K562 (cell line): ENCODE measurements at regions of chr15 and their contacts with region 1.

Region 1: DNA sequence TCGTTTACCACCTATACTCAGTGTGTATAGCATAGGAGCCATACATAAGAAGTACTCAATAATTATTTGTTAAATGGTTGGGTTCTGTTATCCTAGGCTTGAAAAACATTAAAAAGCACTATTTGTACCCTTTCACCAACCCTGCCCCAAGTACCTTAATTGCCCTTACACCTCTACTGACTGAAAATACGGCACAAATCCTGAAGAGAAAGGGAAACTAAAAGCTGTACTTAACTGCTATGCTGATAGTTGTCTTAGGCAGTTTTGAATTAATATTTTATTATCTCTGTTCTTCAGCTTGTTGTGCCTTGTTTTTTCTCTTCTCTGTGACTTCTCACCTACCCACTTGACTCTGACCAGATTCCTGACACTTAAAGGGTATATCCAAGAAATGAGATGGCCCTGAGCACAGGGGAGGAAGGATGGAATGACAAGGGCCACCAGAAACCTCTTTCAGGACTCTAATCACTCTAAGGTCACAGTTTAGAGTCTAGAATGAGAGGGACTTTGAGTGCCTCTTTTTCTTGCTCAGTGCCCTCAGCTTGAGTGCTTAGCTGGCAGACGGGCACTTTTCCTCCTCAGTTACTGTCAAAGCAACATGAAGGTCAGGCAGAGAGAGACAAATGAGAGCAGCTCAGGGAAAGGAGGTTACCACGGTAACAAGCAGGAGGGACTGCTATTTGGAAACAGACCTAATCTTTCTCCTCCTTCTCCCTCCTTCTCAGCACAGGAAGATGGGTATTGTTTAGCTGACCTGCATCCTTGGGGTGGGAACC is 136.5 kb downstream of the ZNF609 start:
- DNase-seq: peak in 2 of 4 experiments; percentile 45 to 47
- ATAC-seq: peak; percentile 82
- H3K4me3 ChIP-seq: no peak overlapping the region
- H3K27ac ChIP-seq: peak overlapping the region; percentile 37; the same call in 2 of the 3 replicates
- H3K4me1 ChIP-seq: peaks cover 0 to 11% of the 10 kb centered on the region in 2 experiments; a peak in 3 of 5 replicates
- H3K27me3 ChIP-seq: no peaks in the 10 kb centered on the region
- CTCF ChIP-seq: no peak
- EP300 ChIP-seq: no peak
- POLR2A ChIP-seq: no peak
- RAD21 ChIP-seq: no peak

Region 2: DNA sequence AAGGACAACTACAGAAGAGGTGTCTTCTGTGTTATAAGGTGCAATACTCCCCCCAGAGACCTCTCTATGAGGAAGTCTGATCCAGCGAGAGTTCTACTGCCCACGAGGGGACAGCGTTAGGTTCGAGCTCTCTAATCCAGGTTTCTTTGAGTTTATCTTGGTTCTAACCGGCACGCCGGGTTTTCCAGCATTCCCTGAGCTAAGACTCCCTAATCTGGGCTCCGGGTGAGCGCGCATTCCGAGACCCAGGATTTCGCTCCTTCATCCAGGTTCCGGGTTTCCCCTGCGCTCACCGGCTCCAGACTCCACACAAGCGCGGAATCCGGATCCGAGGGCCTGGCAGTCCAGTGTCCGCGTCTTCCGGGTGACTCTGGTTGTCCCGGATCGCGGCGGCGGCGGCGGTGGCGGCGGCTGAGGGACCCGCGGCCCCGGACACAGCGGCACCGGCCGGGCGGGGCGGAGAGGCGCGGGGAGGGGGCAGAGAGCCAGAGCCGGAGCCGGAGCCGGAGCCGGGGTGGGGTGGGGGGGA is 136.6 kb before region 1 on chr15 and contains the start of gene ZNF609:
- CTCF ChIA-PET with region 1: no interaction called
- POLR2A ChIA-PET with region 1: no interaction called
- in situ Hi-C with region 1: no loop called
- intact Hi-C with region 1: no loop called
- DNase-seq: peak; percentile 95
- ATAC-seq: peak; percentile 73
- H3K4me3 ChIP-seq: peak within 1 kb of the TSS; percentile 55
- H3K27ac ChIP-seq: peak within 1 kb of the TSS; percentile 88
- H3K4me1 ChIP-seq: peaks cover 6 to 60% of the 10 kb centered on the region in 2 experiments; a peak in 4 of 5 replicates
- H3K27me3 ChIP-seq: no peaks in the 10 kb centered on the region
- CTCF ChIP-seq: no peak
- EP300 ChIP-seq: peak; percentile 62
- POLR2A ChIP-seq: peak; percentile 39; the same call in 1 of the 2 replicates
- RAD21 ChIP-seq: peak in 1 of 2 experiments; percentile 33; a peak in 1 of 4 replicates
- polyA plus RNA-seq, gene ZNF609: 3.0 to 7.6 TPM

Region 3: GRCh38 chr15:64586259-64586870 is 10.5 kb before region 1 on chr15:
- CTCF ChIA-PET with region 1: no interaction called
- POLR2A ChIA-PET with region 1: interaction called, 13 read pairs
- in situ Hi-C with region 1: no loop called
- intact Hi-C with region 1: no loop called
- DNase-seq: no peak
- ATAC-seq: no peak
- H3K4me3 ChIP-seq: no peak overlapping the region
- H3K27ac ChIP-seq: no peak overlapping the region
- H3K4me1 ChIP-seq: peaks cover 12 to 16% of the 10 kb centered on the region in 2 experiments
- H3K27me3 ChIP-seq: no peaks in the 10 kb centered on the region
- CTCF ChIP-seq: no peak
- EP300 ChIP-seq: no peak
- POLR2A ChIP-seq: no peak
- RAD21 ChIP-seq: no peak